ENCODE measurements at regions of chr7 and their contacts with region 1.

Region 1: DNA sequence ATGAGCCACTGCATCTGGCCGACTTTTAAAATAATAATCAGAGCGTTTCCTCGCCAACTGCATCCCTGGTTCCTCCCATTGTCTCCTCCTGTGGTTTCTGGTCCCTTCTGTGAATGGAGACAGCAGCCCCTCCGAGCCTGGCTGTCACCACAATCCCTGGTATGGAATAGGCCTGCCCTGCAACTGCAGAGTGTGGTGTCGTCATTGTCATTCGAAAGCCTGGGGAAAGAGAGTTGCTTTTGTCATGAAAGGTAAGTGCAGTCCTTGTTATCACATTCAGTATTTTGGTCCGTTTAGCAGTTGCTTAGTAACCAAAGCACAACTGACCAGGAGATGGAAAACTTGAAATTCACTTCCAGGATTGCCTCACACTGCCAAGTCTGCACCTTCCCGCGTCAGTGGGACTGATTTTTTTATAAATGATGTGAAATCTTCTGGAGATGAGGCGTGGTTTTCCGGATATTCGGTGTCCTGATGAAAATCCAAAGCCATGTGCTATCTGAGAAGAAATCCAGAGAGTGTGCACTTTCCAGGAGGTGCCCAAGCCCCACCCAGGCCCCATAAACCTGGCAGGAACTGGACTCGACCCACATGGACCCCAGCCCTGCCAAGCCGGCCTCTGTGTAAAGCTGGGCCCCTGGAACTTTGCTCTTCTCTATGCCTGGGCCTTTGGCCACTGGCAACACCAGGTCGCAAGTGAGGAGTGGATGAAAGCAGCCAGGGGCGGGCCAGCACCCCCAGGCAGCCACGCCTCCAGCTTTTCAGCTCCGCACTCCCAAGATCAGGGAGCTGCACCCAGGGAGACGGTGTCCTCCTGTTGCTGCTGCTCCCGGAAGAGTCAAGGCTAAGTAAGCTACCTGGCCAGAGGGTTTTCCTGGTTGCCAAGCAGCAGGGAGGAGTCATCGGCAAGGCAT is 133.7 kb upstream of the SH2B2 start:
- DNase-seq: peak; percentile 94
- ATAC-seq: peak; percentile 93
- H3K4me3 ChIP-seq: peak overlapping the region; percentile 17 to 55 (median 26); a peak in 4 of 6 replicates
- H3K27ac ChIP-seq: peak overlapping the region; percentile 100
- H3K4me1 ChIP-seq: peaks cover 70% of the 10 kb centered on the region
- H3K27me3 ChIP-seq: no peaks in the 10 kb centered on the region
- CTCF ChIP-seq: no peak
- EP300 ChIP-seq: peak; percentile 14 to 50; a peak in 1 of 4 replicates
- POLR2A ChIP-seq: peak; percentile 61 to 87; a peak in 3 of 4 replicates
- RAD21 ChIP-seq: 0 out of 2 replicates have a peak, but pooled peaks have one; percentile 50

Region 2: GRCh38 chr7:102024769-102025391 is 128.0 kb before region 1 on chr7:
- CTCF ChIA-PET with region 1: no interaction called
- POLR2A ChIA-PET with region 1: interaction called, 10 read pairs
- in situ Hi-C with region 1: no loop called
- intact Hi-C with region 1: no loop called
- DNase-seq: peak; percentile 98
- ATAC-seq: peak; percentile 98
- H3K4me3 ChIP-seq: peak overlapping the region; percentile 13 to 50 (median 28); a peak in 5 of 6 replicates
- H3K27ac ChIP-seq: peak overlapping the region; percentile 88
- H3K4me1 ChIP-seq: peaks cover 39% of the 10 kb centered on the region
- H3K27me3 ChIP-seq: no peaks in the 10 kb centered on the region
- CTCF ChIP-seq: no peak
- EP300 ChIP-seq: peak in 1 of 2 experiments; percentile 67; a peak in 1 of 4 replicates
- POLR2A ChIP-seq: peak; percentile 61 to 88; a peak in 3 of 4 replicates
- RAD21 ChIP-seq: peak; percentile 47; the same call in 1 of the 2 replicates

Region 3: GRCh38 chr7:102122026-102122425 is 30.9 kb before region 1 on chr7:
- CTCF ChIA-PET with region 1: no interaction called
- POLR2A ChIA-PET with region 1: interaction called, 3 read pairs
- in situ Hi-C with region 1: no loop called
- intact Hi-C with region 1: loop called (anchors 1 kb)
- DNase-seq: no peak
- ATAC-seq: no peak
- H3K4me3 ChIP-seq: peak overlapping the region in 1 of 3 experiments; percentile 37; a peak in 1 of 6 replicates
- H3K27ac ChIP-seq: peak overlapping the region; percentile 88
- H3K4me1 ChIP-seq: peaks cover 30% of the 10 kb centered on the region
- H3K27me3 ChIP-seq: no peaks in the 10 kb centered on the region
- CTCF ChIP-seq: no peak
- EP300 ChIP-seq: no peak
- POLR2A ChIP-seq: no peak
- RAD21 ChIP-seq: no peak

Region 4: GRCh38 chr7:102129636-102130370 is 23.1 kb before region 1 on chr7:
- CTCF ChIA-PET with region 1: no interaction called
- POLR2A ChIA-PET with region 1: interaction called, 12 read pairs
- in situ Hi-C with region 1: no loop called
- intact Hi-C with region 1: loop called (anchors 2 kb)
- DNase-seq: no peak
- ATAC-seq: no peak
- H3K4me3 ChIP-seq: no peak overlapping the region
- H3K27ac ChIP-seq: no peak overlapping the region
- H3K4me1 ChIP-seq: peaks cover 29% of the 10 kb centered on the region
- H3K27me3 ChIP-seq: no peaks in the 10 kb centered on the region
- CTCF ChIP-seq: no peak
- EP300 ChIP-seq: no peak
- POLR2A ChIP-seq: no peak
- RAD21 ChIP-seq: no peak

Region 5: GRCh38 chr7:102236592-102237287 is 83.8 kb after region 1 on chr7:
- CTCF ChIA-PET with region 1: no interaction called
- POLR2A ChIA-PET with region 1: no interaction called
- in situ Hi-C with region 1: no loop called
- intact Hi-C with region 1: loop called (anchors 10 kb)
- DNase-seq: peak; percentile 46
- ATAC-seq: peak; percentile 95
- H3K4me3 ChIP-seq: no peak overlapping the region
- H3K27ac ChIP-seq: no peak overlapping the region
- H3K4me1 ChIP-seq: peaks cover 7% of the 10 kb centered on the region
- H3K27me3 ChIP-seq: no peaks in the 10 kb centered on the region
- CTCF ChIP-seq: peak; percentile 94
- EP300 ChIP-seq: no peak
- POLR2A ChIP-seq: no peak
- RAD21 ChIP-seq: peak; percentile 94